ENCODE measurements at regions of chr10 and their contacts with region 1.

Region 1: GRCh38 chr10:29443745-29444523 is 155.1 kb downstream of the LYZL1 start:
- DNase-seq: no peak
- H3K4me3 ChIP-seq: no peak overlapping the region
- H3K27ac ChIP-seq: no peak overlapping the region
- H3K4me1 ChIP-seq: no peaks in the 10 kb centered on the region
- H3K27me3 ChIP-seq: no peaks in the 10 kb centered on the region
- CTCF ChIP-seq: no peak

Region 2: DNA sequence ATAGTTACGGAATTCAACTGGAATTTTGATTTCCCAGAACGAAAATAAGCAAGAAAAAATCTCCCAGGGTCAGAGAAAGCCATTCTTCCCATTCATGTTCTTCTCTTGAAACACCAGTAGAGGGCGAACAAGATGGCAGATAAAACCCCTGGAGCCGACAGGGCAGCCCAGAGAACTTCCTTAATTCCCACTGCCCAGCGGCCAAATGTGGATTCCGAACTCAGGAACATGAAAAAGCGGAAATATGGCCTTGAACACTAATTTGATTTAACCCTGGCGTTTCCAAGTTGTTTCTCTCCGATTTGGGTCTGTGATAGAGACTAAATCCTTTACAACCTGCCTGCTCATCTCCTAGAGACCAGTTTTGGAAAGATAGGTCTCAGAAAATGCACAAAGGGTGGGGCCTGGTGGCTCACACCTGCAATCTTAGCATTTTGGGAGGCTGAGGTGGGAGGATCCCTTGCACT is 1011.7 kb before region 1 on chr10:
- CTCF ChIA-PET with region 1: no interaction called
- POLR2A ChIA-PET with region 1: no interaction called
- intact Hi-C with region 1: loop called (anchors 5 kb)
- DNase-seq: peak; percentile 45 to 58
- H3K4me3 ChIP-seq: no peak overlapping the region
- H3K27ac ChIP-seq: no peak overlapping the region
- H3K4me1 ChIP-seq: no peaks in the 10 kb centered on the region
- H3K27me3 ChIP-seq: no peaks in the 10 kb centered on the region
- CTCF ChIP-seq: peak; percentile 75

Region 3: DNA sequence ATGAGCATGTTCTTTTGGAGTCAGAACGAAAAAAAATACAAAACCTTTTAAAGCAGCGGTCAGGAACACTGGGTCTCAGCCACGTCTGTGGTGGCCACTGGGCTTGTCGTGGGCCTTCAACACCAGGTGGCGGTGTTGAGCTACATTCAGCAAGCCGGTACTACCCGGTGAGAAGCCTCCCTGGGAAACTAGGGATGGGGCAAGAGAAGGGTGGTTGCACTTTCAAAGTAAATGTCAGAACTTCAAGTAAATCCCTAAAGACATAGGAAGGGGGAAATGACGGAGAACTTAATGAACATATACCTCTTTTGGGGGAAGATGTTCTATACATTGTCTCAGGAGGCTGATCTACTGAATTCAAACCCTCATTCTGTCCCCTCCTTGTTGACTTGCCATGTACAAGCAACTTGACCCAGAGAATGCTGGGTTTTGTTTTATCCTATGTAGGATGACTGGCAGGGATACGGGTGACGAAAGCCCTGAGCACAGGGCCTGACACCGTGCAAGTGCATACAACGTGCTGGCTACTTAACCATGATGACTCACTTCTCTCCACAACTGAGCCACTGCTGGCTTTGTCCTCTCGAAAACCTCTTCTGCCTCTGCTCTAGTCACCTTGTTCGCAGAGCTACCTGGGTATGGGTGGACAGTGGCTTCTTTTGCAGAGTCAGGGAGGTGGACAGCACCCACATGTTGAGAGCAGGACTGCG is 815.6 kb before region 1 on chr10:
- CTCF ChIA-PET with region 1: no interaction called
- POLR2A ChIA-PET with region 1: no interaction called
- intact Hi-C with region 1: loop called (anchors 1 kb)
- DNase-seq: peak; percentile 51 to 74
- H3K4me3 ChIP-seq: no peak overlapping the region
- H3K27ac ChIP-seq: no peak overlapping the region
- H3K4me1 ChIP-seq: peaks cover 7% of the 10 kb centered on the region; the same call in 1 of the 2 replicates
- H3K27me3 ChIP-seq: no peaks in the 10 kb centered on the region
- CTCF ChIP-seq: peak; percentile 91

Region 4: GRCh38 chr10:29377333-29377961 is 66.5 kb before region 1 on chr10:
- CTCF ChIA-PET with region 1: no interaction called
- POLR2A ChIA-PET with region 1: no interaction called
- intact Hi-C with region 1: loop called (anchors 5 kb)
- DNase-seq: no peak
- H3K4me3 ChIP-seq: no peak overlapping the region
- H3K27ac ChIP-seq: no peak overlapping the region
- H3K4me1 ChIP-seq: no peaks in the 10 kb centered on the region
- H3K27me3 ChIP-seq: no peaks in the 10 kb centered on the region
- CTCF ChIP-seq: peak; percentile 69

Region 5: GRCh38 chr10:29392376-29393021 is 51.4 kb before region 1 on chr10:
- CTCF ChIA-PET with region 1: no interaction called
- POLR2A ChIA-PET with region 1: no interaction called
- intact Hi-C with region 1: no loop called
- DNase-seq: peak in 1 of 2 experiments; percentile 33
- H3K4me3 ChIP-seq: no peak overlapping the region
- H3K27ac ChIP-seq: no peak overlapping the region
- H3K4me1 ChIP-seq: no peaks in the 10 kb centered on the region
- H3K27me3 ChIP-seq: peaks cover 4% of the 10 kb centered on the region; the same call in 1 of the 2 replicates
- CTCF ChIP-seq: peak; percentile 80

Region 6: DNA sequence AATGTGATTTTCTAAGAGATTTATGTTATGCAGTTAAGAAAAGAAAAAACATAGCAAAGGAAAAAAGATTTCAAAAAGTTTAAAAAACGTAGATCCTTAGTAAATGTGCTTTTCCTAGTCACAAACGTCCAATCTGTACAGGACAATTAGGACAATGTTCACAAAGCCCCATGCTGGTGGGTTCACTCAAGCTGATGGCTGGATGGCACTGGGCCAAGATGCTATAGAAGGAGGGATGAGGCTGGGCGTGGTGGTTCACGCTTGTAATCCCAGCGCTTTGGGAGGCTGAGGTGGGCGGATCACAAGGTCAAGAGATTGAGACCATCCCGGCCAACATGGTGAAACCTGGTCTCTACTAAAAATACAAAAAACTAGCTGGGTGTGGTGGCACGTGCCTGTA is 168.7 kb after region 1 on chr10:
- CTCF ChIA-PET with region 1: interaction called, 14 read pairs
- POLR2A ChIA-PET with region 1: no interaction called
- intact Hi-C with region 1: no loop called
- DNase-seq: no peak
- H3K4me3 ChIP-seq: no peak overlapping the region
- H3K27ac ChIP-seq: no peak overlapping the region
- H3K4me1 ChIP-seq: no peaks in the 10 kb centered on the region; the same call in 1 of the 2 replicates
- H3K27me3 ChIP-seq: no peaks in the 10 kb centered on the region
- CTCF ChIP-seq: no peak

Measured in PC-9 (cell line).